Natural killer cell (primary cell): ENCODE measurements at regions of chr5 and their contacts with region 1.

Region 1: GRCh38 chr5:67246108-67246507 is 49.5 kb upstream of the CD180 start:
- DNase-seq: peak in 1 of 2 donors; percentile 85
- ATAC-seq: peak; percentile 49 to 61 (median 54)
- H3K4me3 ChIP-seq: no peak overlapping the region
- H3K4me3 Mint-ChIP-seq: no peak overlapping the region
- H3K27ac ChIP-seq: no peak overlapping the region
- H3K27ac Mint-ChIP-seq: no peak overlapping the region
- H3K4me1 ChIP-seq: peaks cover 7% of the 10 kb centered on the region
- H3K4me1 Mint-ChIP-seq: peaks cover 11% of the 10 kb centered on the region in 2 donors
- H3K27me3 ChIP-seq: no peaks in the 10 kb centered on the region
- H3K27me3 Mint-ChIP-seq: no peaks in the 10 kb centered on the region
- CTCF ChIP-seq: peak; percentile 91

Region 2: DNA sequence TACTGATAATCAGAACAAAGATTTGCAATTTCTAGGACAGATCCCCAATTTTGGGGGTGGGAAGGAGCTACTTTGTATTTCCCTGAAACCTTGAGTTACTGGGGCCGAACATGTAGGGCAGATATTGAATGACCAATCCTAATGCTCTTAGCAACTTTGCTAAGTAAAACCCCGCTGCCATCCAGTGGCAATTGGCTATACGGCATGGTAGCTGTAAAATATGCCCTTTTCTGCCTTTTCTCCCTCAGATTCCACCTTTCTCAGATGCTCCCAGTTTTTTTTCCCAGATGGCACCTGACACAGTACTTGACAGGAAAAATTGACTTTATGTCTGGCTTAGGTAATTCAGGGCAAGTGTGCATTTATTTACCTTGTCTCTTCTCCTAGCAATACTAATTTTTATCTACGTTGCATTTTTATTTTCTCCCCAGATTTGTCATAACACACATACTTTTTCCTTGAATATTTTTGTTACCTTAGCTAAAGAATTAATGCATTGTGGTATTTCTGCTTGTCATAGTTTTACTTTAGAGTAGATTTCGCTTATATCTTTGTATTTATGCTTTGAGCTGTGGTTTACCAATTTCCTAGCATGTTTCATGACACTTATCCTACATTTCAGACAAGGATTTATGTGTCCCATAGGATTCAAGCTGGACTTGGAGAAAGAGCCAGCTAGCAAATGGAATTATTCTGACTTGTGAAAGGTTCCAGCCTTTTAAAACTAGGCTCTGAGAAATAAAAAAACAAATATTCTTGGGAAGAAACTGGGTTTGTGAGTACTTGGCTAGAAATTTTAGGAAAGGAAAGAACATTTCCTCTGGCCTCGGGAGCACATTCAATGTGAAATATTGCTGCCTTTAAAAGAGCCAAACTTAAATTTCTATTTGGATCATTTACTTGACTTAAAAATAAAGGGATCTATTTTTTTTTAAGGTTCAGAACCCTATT is 1006.8 kb after region 1 on chr5:
- intact Hi-C with region 1: loop called (anchors 1 kb)
- DNase-seq: peak in 1 of 2 donors; percentile 74
- ATAC-seq: peak; percentile 53 to 66 (median 65)
- H3K4me3 ChIP-seq: no peak overlapping the region
- H3K4me3 Mint-ChIP-seq: peak overlapping the region; percentile 9
- H3K27ac ChIP-seq: no peak overlapping the region
- H3K27ac Mint-ChIP-seq: peak overlapping the region; percentile 87 to 90
- H3K4me1 ChIP-seq: peaks cover 48% of the 10 kb centered on the region
- H3K4me1 Mint-ChIP-seq: peaks cover 86 to 88% of the 10 kb centered on the region in 2 donors
- H3K27me3 ChIP-seq: no peaks in the 10 kb centered on the region
- H3K27me3 Mint-ChIP-seq: no peaks in the 10 kb centered on the region
- CTCF ChIP-seq: peak; percentile 67

Region 3: DNA sequence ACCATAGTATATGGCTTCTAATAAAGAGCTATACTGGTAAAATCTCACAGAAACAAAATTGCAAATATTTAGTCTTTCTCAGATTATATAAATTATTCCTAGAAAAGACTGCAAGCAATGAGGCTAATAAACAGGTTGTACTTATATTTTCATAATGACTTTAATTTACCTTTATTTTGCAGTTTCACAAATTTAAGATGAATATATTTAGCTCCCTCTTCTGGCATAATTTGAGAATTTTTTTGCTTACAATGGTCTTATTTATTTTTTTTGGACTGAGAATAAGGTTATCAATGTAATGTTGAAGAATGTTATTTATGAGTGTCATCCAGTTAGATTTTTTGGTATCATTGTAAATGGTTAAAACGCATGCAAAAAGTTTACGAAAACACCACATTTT is 1026.2 kb after region 1 on chr5:
- intact Hi-C with region 1: loop called (anchors 5 kb)
- DNase-seq: peak in 1 of 2 donors; percentile 55
- ATAC-seq: no peak
- H3K4me3 ChIP-seq: no peak overlapping the region
- H3K4me3 Mint-ChIP-seq: no peak overlapping the region
- H3K27ac ChIP-seq: no peak overlapping the region
- H3K27ac Mint-ChIP-seq: peak overlapping the region; percentile 67 to 92
- H3K4me1 ChIP-seq: peaks cover 20% of the 10 kb centered on the region
- H3K4me1 Mint-ChIP-seq: peaks cover 74 to 76% of the 10 kb centered on the region in 2 donors
- H3K27me3 ChIP-seq: no peaks in the 10 kb centered on the region
- H3K27me3 Mint-ChIP-seq: no peaks in the 10 kb centered on the region
- CTCF ChIP-seq: peak; percentile 76

Region 4: GRCh38 chr5:68460147-68460798 is 1214.2 kb after region 1 on chr5:
- intact Hi-C with region 1: loop called (anchors 2 kb)
- DNase-seq: peak in 1 of 2 donors; percentile 82
- ATAC-seq: peak; percentile 62 to 78 (median 68)
- H3K4me3 ChIP-seq: no peak overlapping the region
- H3K4me3 Mint-ChIP-seq: no peak overlapping the region
- H3K27ac ChIP-seq: no peak overlapping the region
- H3K27ac Mint-ChIP-seq: no peak overlapping the region
- H3K4me1 ChIP-seq: peaks cover 12% of the 10 kb centered on the region
- H3K4me1 Mint-ChIP-seq: peaks cover 7 to 9% of the 10 kb centered on the region in 2 donors
- H3K27me3 ChIP-seq: no peaks in the 10 kb centered on the region
- H3K27me3 Mint-ChIP-seq: no peaks in the 10 kb centered on the region
- CTCF ChIP-seq: peak; percentile 85

Region 5: DNA sequence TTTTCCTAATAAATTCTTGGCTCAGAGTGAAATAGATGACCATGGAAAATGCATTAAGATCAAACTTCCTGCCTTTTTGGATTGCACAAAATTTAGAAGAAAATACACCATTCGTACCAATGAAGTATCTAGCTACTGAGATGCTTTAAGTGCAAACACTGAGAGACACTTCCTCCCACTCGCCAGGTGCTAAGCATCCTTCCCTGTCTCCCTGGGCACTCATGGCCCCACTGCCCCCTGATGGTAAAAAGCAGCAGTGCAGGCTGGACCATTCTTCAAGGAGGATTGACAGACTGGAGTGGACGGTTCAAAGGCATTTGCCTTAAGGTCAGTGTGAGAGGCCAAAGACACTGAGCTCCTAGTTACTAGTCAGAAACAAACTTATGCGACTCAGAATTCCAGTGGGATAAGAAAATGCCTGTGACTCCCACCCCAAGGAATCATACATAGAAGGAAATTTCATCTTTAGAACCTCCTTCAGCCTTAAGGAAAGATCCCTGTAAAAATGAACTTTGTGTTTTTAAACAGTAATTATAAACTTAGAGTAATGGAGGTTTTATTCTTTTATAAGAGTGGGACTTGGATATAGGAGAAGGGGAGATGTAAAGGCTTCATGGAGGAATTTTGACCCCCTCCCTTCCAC is 1761.7 kb after region 1 on chr5:
- intact Hi-C with region 1: loop called (anchors 5 kb)
- DNase-seq: peak; percentile 40 to 79
- ATAC-seq: peak; percentile 75 to 87 (median 78)
- H3K4me3 ChIP-seq: no peak overlapping the region
- H3K4me3 Mint-ChIP-seq: no peak overlapping the region
- H3K27ac ChIP-seq: no peak overlapping the region
- H3K27ac Mint-ChIP-seq: no peak overlapping the region
- H3K4me1 ChIP-seq: no peaks in the 10 kb centered on the region
- H3K4me1 Mint-ChIP-seq: no peaks in the 10 kb centered on the region
- H3K27me3 ChIP-seq: no peaks in the 10 kb centered on the region
- H3K27me3 Mint-ChIP-seq: peaks cover 14 to 50% of the 10 kb centered on the region in 2 donors
- CTCF ChIP-seq: peak; percentile 79